ENCODE measurements at regions of chr3 and their contacts with region 1.

Region 1: GRCh38 chr3:187811585-187812250 is 66.5 kb upstream of the BCL6 start:
- DNase-seq: no peak
- H3K4me3 ChIP-seq: no peak overlapping the region
- H3K4me3 Mint-ChIP-seq: no peak overlapping the region
- H3K27ac Mint-ChIP-seq: peak overlapping the region; percentile 81
- H3K4me1 ChIP-seq: peaks cover 52% of the 10 kb centered on the region
- H3K4me1 Mint-ChIP-seq: peaks cover 30% of the 10 kb centered on the region
- H3K27me3 ChIP-seq: no peaks in the 10 kb centered on the region
- H3K27me3 Mint-ChIP-seq: no peaks in the 10 kb centered on the region
- CTCF ChIP-seq: no peak

Region 2: DNA sequence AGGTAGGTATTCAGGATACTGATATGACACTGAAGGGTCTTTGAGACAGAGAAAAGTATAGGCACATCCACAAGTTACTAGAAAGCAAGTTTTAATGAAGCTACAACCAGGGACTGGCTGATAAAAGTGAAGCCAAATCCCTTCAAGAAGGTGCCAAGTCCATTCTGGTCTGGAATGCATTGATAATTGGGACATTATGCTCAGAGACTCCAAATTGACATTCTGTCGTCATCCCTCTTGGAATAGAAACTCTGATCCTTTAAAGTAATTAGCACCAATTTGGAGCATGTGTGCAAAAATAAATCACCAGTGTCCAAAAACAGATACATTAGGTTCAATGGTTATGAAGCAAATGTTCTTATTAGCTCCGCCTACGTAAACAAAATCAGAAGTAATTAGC is 19.2 kb before region 1 on chr3:
- CTCF ChIA-PET with region 1: no interaction called
- POLR2A ChIA-PET with region 1: no interaction called
- intact Hi-C with region 1: loop called (anchors 2 kb)
- DNase-seq: no peak
- H3K4me3 ChIP-seq: no peak overlapping the region
- H3K4me3 Mint-ChIP-seq: no peak overlapping the region
- H3K27ac Mint-ChIP-seq: no peak overlapping the region
- H3K4me1 ChIP-seq: peaks cover 47% of the 10 kb centered on the region
- H3K4me1 Mint-ChIP-seq: peaks cover 40% of the 10 kb centered on the region
- H3K27me3 ChIP-seq: no peaks in the 10 kb centered on the region
- H3K27me3 Mint-ChIP-seq: no peaks in the 10 kb centered on the region
- CTCF ChIP-seq: no peak

Region 3: GRCh38 chr3:187799942-187800641 is 11.6 kb before region 1 on chr3:
- CTCF ChIA-PET with region 1: interaction called, 14 read pairs
- POLR2A ChIA-PET with region 1: interaction called, 3 read pairs
- intact Hi-C with region 1: no loop called
- DNase-seq: no peak
- H3K4me3 ChIP-seq: no peak overlapping the region
- H3K4me3 Mint-ChIP-seq: no peak overlapping the region
- H3K27ac Mint-ChIP-seq: no peak overlapping the region
- H3K4me1 ChIP-seq: peaks cover 6% of the 10 kb centered on the region; the same call in 1 of the 2 replicates
- H3K4me1 Mint-ChIP-seq: peaks cover 17% of the 10 kb centered on the region
- H3K27me3 ChIP-seq: no peaks in the 10 kb centered on the region
- H3K27me3 Mint-ChIP-seq: no peaks in the 10 kb centered on the region
- CTCF ChIP-seq: no peak

Region 4: DNA sequence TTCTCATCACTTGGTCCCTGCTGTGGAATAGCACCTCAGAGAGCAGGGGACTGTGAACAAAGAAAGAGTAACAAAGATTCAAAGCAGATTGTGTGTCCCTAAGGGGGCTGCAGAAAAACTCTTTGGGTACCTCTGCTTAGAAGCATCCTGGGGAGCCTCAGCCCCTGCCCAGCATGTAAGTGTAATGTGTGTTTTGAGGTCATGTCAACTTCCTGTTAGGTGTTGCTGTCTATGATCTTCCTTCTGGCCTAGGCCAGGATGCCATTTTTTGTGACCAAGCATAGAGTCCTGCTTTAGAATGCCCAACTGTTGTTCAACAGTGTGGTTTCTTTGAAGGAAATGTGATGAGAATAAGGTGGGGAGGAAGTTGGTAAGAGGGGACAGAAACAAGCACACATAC is 10.7 kb after region 1 on chr3:
- CTCF ChIA-PET with region 1: no interaction called
- POLR2A ChIA-PET with region 1: interaction called, 10 read pairs
- intact Hi-C with region 1: no loop called
- DNase-seq: no peak
- H3K4me3 ChIP-seq: no peak overlapping the region
- H3K4me3 Mint-ChIP-seq: no peak overlapping the region
- H3K27ac Mint-ChIP-seq: no peak overlapping the region
- H3K4me1 ChIP-seq: no peaks in the 10 kb centered on the region
- H3K4me1 Mint-ChIP-seq: no peaks in the 10 kb centered on the region
- H3K27me3 ChIP-seq: no peaks in the 10 kb centered on the region
- H3K27me3 Mint-ChIP-seq: no peaks in the 10 kb centered on the region
- CTCF ChIP-seq: no peak

Region 5: DNA sequence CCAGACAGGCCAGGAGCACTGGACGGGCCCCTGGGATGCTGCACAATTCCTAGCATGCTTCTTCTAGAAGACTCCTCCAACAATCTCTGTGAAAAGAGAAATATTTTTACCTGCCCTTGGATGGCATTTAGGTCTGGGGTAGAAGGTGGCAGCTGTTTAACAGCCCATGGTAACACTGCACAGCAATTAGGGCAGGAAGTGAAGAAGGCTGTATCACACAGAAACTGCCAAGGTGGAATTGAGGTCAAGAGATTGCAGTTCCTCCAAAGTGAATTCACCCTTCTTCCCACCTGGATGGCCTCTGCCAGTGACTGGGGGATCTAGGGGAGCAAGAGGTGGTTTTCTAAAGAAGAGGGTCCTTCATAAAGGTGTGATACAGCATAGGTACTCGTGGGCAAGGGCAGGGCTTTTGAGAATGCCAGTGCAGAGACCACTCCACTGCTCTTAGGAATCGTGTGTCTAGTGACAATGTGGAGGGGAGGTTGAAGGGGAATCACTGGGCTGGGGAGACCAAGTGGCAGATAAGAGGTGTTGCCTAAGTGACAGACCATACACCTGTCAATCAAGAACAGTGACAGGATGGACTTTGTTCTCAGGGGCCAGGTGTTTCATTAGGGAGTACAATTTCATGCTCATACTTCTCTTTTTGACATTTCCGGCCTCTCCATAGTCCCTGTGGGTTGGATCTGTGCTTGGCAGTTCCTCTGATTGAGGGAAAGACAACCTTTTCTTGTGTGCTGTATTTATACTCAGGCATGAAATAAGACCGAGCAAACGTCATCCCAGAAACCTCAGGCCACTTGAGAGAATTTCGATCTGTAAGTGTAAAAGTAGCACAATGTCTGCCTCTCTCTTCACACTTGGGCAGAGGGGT is 17.1 kb after region 1 on chr3:
- CTCF ChIA-PET with region 1: no interaction called
- POLR2A ChIA-PET with region 1: no interaction called
- intact Hi-C with region 1: loop called (anchors 2 kb)
- DNase-seq: peak; percentile 41 to 63
- H3K4me3 ChIP-seq: no peak overlapping the region
- H3K4me3 Mint-ChIP-seq: peak overlapping the region; percentile 34
- H3K27ac Mint-ChIP-seq: peak overlapping the region; percentile 42
- H3K4me1 ChIP-seq: peaks cover 22% of the 10 kb centered on the region
- H3K4me1 Mint-ChIP-seq: peaks cover 18% of the 10 kb centered on the region
- H3K27me3 ChIP-seq: no peaks in the 10 kb centered on the region
- H3K27me3 Mint-ChIP-seq: no peaks in the 10 kb centered on the region
- CTCF ChIP-seq: no peak

Region 6: GRCh38 chr3:187838016-187838540 is 26.4 kb after region 1 on chr3:
- CTCF ChIA-PET with region 1: no interaction called
- POLR2A ChIA-PET with region 1: no interaction called
- intact Hi-C with region 1: loop called (anchors 2 kb)
- DNase-seq: no peak
- H3K4me3 ChIP-seq: no peak overlapping the region
- H3K4me3 Mint-ChIP-seq: no peak overlapping the region
- H3K27ac Mint-ChIP-seq: no peak overlapping the region
- H3K4me1 ChIP-seq: peaks cover 14% of the 10 kb centered on the region
- H3K4me1 Mint-ChIP-seq: peaks cover 20% of the 10 kb centered on the region
- H3K27me3 ChIP-seq: no peaks in the 10 kb centered on the region
- H3K27me3 Mint-ChIP-seq: no peaks in the 10 kb centered on the region
- CTCF ChIP-seq: no peak

Region 7: DNA sequence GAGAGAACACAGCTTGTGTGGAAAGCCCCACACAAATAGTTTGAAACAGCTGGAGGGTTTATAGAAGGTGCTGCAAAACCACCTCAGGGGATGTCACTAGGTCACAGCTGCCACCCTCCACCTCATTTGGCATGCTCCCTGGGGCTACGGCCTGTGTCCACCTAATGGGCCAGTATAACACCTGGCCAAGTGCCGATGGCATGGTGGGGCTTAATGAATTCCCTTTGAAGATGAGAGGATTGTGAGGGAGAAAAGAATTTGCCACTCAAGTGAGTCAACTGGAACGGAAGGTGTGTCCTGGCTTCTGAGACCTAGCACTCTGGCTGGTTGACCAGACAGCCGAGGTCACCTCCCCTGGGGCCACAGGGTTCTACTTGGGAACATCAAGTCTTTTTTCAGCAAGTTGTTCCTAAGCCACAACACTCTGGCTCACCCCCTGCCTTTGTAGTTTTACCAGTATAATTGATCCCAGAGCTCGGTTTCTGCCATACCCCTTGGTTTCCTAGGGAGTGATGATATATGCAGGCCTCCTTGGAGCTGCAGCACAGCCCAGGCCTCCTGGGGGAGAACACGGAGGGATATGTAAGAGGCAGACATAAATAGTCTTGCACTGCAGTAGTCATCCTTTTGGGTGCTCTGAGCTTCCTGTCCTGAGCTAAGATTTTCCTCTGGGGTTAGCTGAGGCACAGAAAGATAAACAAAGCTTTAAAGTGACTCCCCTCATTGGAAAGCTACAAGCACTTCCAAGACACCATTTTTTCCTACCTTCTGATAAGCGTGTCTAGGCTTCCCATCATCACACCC is 164.0 kb after region 1 on chr3:
- CTCF ChIA-PET with region 1: no interaction called
- POLR2A ChIA-PET with region 1: no interaction called
- intact Hi-C with region 1: no loop called
- DNase-seq: peak in 1 of 2 experiments; percentile 68
- H3K4me3 ChIP-seq: no peak overlapping the region
- H3K4me3 Mint-ChIP-seq: no peak overlapping the region
- H3K27ac Mint-ChIP-seq: no peak overlapping the region
- H3K4me1 ChIP-seq: no peaks in the 10 kb centered on the region; the same call in 1 of the 2 replicates
- H3K4me1 Mint-ChIP-seq: peaks cover 16% of the 10 kb centered on the region
- H3K27me3 ChIP-seq: no peaks in the 10 kb centered on the region
- H3K27me3 Mint-ChIP-seq: no peaks in the 10 kb centered on the region
- CTCF ChIP-seq: no peak

Region 8: DNA sequence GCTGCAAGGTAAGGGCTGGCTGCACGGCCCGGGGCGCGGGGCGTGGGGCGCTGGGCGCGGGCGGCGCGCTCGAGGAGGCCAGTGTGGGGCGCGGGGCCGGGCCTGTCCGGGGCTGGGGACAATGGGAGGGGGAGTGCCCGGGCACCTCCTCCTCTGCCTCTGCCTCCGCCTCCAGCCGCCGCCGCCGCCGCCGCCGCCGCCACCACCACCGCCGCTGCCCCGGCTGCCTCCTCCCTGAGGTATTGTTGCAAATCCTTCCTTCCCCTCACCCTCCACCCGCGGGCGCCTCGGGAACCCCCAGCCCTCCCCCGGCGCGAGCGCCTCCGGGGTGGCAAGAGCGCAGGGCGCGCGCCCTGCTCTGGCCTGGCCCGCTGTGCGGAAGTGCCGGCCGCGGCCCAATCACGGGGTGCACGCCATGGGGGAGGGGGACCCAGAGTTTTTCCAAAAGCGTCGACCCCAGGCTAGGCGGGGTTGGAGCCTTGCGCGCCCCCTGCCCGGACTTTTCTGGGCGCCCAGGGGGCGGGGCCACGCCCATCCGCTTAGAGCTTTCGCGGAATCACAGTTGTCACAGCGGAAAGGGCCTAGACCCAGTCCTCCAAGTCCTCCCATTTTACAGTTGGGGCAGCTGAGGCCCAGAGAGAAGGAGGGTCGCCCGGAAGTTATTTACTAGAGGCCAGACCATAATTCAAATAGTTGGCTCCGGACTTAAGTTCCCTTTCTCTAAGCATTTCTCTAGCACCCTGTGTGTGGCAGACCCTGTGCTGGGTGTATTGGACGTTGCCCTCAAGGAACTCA is 342.5 kb after region 1 on chr3 and contains the start of gene LPP:
- CTCF ChIA-PET with region 1: interaction called, 3 read pairs
- POLR2A ChIA-PET with region 1: no interaction called
- intact Hi-C with region 1: loop called (anchors 1 kb)
- DNase-seq: peak; percentile 79 to 86
- H3K4me3 ChIP-seq: peak within 1 kb of the TSS; percentile 68
- H3K4me3 Mint-ChIP-seq: peak within 1 kb of the TSS; percentile 84
- H3K27ac Mint-ChIP-seq: peak within 1 kb of the TSS; percentile 89
- H3K4me1 ChIP-seq: peaks cover 66% of the 10 kb centered on the region
- H3K4me1 Mint-ChIP-seq: peaks cover 48% of the 10 kb centered on the region
- H3K27me3 ChIP-seq: no peaks in the 10 kb centered on the region
- H3K27me3 Mint-ChIP-seq: no peaks in the 10 kb centered on the region
- CTCF ChIP-seq: peak in 1 of 2 experiments; percentile 27
- total RNA-seq, gene LPP: 120 and 147 TPM in 2 replicates